ENCODE measurements at regions of chr17 and their contacts with region 1.

Region 1: DNA sequence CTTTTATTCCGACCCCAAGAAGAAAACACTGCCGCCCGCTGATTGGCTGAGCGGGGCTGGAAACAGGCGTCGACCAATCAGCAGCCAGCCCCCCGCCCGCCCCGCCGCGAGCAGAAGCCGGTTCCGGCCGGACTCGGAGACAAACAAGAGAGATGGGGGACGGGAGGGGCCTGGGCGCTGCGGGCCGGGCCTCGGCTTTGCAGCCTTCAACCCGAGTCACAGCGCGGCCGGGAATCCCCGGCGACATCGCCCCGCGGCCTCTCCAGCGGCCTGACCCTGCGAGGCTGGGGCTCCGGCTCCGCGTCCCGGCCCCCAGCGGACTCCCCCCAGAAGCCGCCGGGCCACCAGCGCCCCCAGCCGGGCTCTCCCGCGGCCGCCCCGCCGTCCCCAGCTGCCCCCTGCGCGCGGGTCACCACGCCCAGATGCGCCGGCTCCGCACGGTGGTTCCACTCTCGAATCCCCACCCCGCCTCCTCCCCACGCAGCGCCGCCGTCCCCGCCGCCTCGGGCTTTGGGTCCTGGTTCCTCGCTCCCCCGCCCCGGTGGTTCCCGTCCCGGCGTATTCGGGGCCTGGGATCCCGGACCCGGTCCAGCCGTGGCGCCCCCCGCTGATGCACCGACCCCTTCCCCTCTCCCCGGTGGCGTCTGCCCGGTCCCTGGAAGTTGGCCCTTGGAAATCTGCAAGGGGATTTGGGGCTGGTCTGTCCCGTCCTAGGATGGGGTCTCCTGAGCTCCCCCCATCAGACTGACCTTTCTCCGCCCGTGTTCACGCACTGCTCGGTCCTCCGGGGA is 417 bp upstream of the SLC43A2 start:
- DNase-seq: peak; percentile 93
- H3K4me3 ChIP-seq: peak overlapping the region; percentile 36 to 73 (median 72)
- H3K27ac ChIP-seq: peak overlapping the region; percentile 40
- H3K4me1 ChIP-seq: peaks cover 15% of the 10 kb centered on the region
- H3K27me3 ChIP-seq: no peaks in the 10 kb centered on the region
- CTCF ChIP-seq: peak in 1 of 2 donors; percentile 25

Region 2: GRCh38 chr17:1260086-1260769 is 368.8 kb before region 1 on chr17:
- CTCF ChIA-PET with region 1: no interaction called
- dilution Hi-C with region 1: no loop called
- in situ Hi-C with region 1: loop called (anchors 10 to 25 kb)
- intact Hi-C with region 1: loop called (anchors 1 kb)
- DNase-seq: no peak
- H3K4me3 ChIP-seq: peak overlapping the region in 2 of 3 experiments; percentile 24 to 65
- H3K27ac ChIP-seq: no peak overlapping the region
- H3K4me1 ChIP-seq: peaks cover 4% of the 10 kb centered on the region
- H3K27me3 ChIP-seq: peaks cover 3% of the 10 kb centered on the region
- CTCF ChIP-seq: no peak

Region 3: GRCh38 chr17:1275962-1276736 is 352.9 kb before region 1 on chr17:
- CTCF ChIA-PET with region 1: no interaction called
- dilution Hi-C with region 1: no loop called
- in situ Hi-C with region 1: loop called in 1 of 2 experiments (anchors 25 kb)
- intact Hi-C with region 1: loop called (anchors 5 kb)
- DNase-seq: no peak
- H3K4me3 ChIP-seq: no peak overlapping the region
- H3K27ac ChIP-seq: no peak overlapping the region
- H3K4me1 ChIP-seq: no peaks in the 10 kb centered on the region
- H3K27me3 ChIP-seq: peaks cover 10% of the 10 kb centered on the region
- CTCF ChIP-seq: peak; percentile 57 to 88

Region 4: DNA sequence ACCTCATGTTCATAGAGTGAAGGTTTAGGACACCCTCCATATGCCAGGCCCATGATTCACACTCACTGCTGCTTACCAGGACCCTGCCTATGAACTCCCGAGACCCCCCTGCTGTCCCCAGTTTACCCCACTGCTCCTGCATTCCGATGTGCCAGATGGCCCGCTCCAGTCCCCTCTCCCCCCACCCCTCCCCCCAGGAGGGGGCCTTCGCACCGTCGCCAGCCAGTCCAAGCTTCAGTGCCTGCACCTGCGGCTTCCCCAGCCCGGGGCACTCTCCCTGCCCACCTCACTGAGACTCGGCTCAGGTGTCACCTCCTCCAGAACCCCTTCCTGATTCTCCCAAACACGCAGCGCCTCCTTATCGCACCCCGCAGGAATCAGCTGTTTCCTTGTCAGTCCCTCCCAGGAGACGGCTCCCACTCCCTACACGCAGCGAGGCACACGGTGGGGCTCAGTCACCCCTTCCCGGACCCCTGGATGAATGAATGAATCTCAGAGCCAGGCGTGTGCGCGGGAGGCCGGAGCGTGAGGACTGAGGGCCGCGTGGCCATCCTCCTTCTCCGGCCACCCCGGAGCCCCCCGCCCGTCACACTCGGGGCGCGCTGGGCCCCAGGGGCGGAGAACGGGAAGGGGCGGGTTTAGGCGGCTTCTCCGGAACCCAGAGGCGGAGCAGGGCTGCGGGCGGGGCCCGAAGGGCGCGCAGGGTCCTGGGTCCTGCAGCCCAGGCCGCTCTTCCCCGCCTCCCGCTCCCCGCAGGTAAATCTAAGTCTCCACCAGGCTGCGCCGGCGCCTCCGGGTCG is 138.2 kb before region 1 on chr17:
- CTCF ChIA-PET with region 1: no interaction called
- dilution Hi-C with region 1: loop called (anchors 10 kb)
- in situ Hi-C with region 1: no loop called
- intact Hi-C with region 1: no loop called
- DNase-seq: peak; percentile 42
- H3K4me3 ChIP-seq: peak overlapping the region; percentile 64 to 83 (median 71)
- H3K27ac ChIP-seq: peak overlapping the region; percentile 27
- H3K4me1 ChIP-seq: peaks cover 42% of the 10 kb centered on the region
- H3K27me3 ChIP-seq: no peaks in the 10 kb centered on the region
- CTCF ChIP-seq: no peak

Region 5: GRCh38 chr17:1516388-1517161 is 112.5 kb before region 1 on chr17 and contains the start of gene INPP5K:
- CTCF ChIA-PET with region 1: interaction called, 3 read pairs
- dilution Hi-C with region 1: no loop called
- in situ Hi-C with region 1: no loop called
- intact Hi-C with region 1: loop called (anchors 1 kb)
- DNase-seq: peak; percentile 98
- H3K4me3 ChIP-seq: peak within 1 kb of the TSS; percentile 95 to 98 (median 96)
- H3K27ac ChIP-seq: peak within 1 kb of the TSS; percentile 71
- H3K4me1 ChIP-seq: peaks cover 27% of the 10 kb centered on the region
- H3K27me3 ChIP-seq: no peaks in the 10 kb centered on the region
- CTCF ChIP-seq: peak in 1 of 2 donors; percentile 17
- total RNA-seq, gene INPP5K: 18.9 to 30.5 TPM

Region 6: DNA sequence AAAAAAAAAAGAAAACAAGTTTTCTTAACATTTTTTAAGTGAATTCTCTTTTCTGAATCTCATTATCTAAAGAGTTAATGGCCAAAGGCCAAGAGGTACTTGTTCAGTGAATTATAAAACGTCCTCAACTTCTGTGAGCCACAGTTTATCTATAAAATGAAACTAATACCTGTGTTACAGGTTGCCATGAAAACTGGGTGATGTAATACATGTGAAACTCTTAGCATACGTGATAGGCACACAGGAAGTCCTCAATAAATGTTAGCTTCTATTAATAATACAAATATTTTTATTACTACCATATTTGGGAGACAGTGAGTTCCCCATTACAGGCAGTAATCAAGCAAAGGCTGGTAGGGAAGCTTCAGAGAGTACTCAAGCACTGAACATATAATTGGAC is 99.2 kb before region 1 on chr17:
- CTCF ChIA-PET with region 1: no interaction called
- dilution Hi-C with region 1: no loop called
- in situ Hi-C with region 1: no loop called
- intact Hi-C with region 1: no loop called
- DNase-seq: no peak
- H3K4me3 ChIP-seq: no peak overlapping the region
- H3K27ac ChIP-seq: no peak overlapping the region
- H3K4me1 ChIP-seq: no peaks in the 10 kb centered on the region
- H3K27me3 ChIP-seq: no peaks in the 10 kb centered on the region
- CTCF ChIP-seq: no peak

Region 7: GRCh38 chr17:1573916-1574696 is 54.9 kb before region 1 on chr17:
- CTCF ChIA-PET with region 1: interaction called, 11 read pairs
- dilution Hi-C with region 1: no loop called
- in situ Hi-C with region 1: loop called (anchors 5 kb)
- intact Hi-C with region 1: loop called (anchors 1 kb)
- DNase-seq: peak; percentile 63
- H3K4me3 ChIP-seq: no peak overlapping the region
- H3K27ac ChIP-seq: no peak overlapping the region
- H3K4me1 ChIP-seq: peaks cover 33% of the 10 kb centered on the region
- H3K27me3 ChIP-seq: no peaks in the 10 kb centered on the region
- CTCF ChIP-seq: peak; percentile 82 to 97

Region 8: DNA sequence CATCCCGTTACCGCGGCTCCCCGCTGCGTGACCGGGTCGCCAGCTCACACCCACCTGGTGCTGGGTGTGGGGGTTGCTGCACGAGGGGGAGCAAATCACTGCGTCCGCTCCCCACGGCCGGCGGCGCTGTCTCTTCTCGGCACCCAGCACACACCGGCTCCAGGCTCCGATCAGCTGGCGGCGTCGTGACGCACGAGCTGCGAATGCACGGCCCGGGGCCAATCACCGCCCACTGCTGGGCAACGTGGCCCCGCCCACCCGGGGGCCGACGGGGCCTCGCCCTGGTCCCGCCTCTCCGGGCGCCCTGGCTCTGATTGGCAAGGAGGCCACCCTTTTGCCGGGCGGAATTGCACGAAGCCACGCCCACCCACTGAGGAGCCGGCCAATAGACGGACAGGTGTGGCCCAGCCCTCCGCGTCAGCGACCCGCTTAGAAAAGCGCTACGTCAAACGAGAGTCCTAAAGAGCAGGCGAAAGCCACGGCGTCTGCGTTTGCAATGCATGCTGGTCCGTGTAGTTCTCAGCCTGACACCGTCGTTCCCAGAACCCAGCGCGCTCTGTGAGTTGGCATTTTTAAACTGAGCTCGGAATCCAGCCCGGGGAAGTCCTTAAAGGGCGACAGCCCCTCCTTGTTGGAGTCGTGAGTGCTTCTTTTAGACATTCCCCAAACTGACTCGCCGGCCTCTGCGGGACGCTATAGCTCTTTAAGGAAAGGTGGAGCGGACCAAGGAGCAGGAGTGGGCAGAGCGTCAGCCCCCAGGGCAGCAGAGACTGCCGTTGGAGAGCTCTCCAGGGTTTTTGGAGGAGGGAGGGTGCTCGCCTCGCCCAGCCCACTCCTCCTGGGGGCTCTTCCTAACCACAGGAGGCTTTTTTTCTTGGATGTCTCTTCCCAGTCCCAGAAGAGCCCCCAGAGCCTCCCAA is 87.3 kb after region 1 on chr17:
- CTCF ChIA-PET with region 1: no interaction called
- dilution Hi-C with region 1: loop called (anchors 5 kb)
- in situ Hi-C with region 1: no loop called
- intact Hi-C with region 1: no loop called
- DNase-seq: peak; percentile 100
- H3K4me3 ChIP-seq: peak overlapping the region; percentile 72 to 97 (median 78)
- H3K27ac ChIP-seq: peak overlapping the region; percentile 90
- H3K4me1 ChIP-seq: peaks cover 45% of the 10 kb centered on the region
- H3K27me3 ChIP-seq: no peaks in the 10 kb centered on the region
- CTCF ChIP-seq: peak in 1 of 2 donors; percentile 32

Region 9: GRCh38 chr17:1787301-1787902 is 158.4 kb after region 1 on chr17:
- CTCF ChIA-PET with region 1: no interaction called
- dilution Hi-C with region 1: no loop called
- in situ Hi-C with region 1: no loop called
- intact Hi-C with region 1: no loop called
- DNase-seq: peak; percentile 86
- H3K4me3 ChIP-seq: no peak overlapping the region
- H3K27ac ChIP-seq: no peak overlapping the region
- H3K4me1 ChIP-seq: peaks cover 25% of the 10 kb centered on the region
- H3K27me3 ChIP-seq: no peaks in the 10 kb centered on the region
- CTCF ChIP-seq: no peak